Activated CD4-positive, alpha-beta T cell treated with anti-CD3 and anti-CD28 coated beads, Interleukin-2, amount 10 ng/mL, durations not matched to agents 24 days and 14 days (primary cell): ENCODE measurements at regions of chr3 and their contacts with region 1.

Region 1: DNA sequence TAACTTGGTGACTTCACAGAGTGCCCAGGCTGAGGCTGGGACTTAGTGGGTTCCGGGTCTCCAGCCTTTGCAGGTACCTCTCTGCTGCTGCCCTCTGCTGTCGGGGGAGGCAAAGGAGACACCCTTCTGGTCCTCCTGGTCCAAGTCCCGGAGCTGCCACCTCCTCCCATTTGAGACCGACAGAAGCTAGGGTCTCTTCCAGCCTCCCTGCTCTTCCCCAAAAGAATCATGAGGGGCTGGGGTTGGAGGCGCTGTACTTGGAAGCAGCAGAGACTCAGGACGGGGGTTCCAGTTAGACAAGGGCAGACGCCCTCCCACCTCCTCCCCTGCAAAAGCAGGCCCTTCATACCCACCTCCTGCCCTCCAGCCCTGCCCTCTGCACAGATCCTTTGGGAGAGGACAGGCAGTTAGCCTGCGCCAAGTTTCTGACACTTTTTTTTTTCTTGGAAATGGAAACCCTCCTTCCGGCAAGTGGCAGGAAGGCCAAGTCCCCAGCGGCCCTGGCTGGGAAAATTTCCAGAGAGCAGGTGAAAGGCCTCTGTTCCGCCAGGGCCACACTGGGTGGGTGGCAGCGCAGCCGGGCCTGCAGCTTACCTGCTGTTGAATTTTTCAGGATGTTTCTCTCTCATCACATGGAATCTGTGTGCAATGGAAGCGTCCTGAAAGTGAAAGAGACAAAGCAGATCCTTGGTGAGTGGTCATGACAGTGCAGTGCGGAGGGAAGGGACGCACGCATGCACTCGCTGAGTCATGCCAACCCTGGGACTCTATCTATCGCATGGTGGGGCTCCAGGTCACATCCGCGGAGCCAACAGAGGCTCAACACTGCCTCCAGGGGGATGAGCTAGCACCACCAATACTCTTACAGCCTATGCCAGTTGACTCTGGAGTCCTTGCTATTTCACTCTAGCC is 119.9 kb downstream of the DGKG start:
- DNase-seq: peak; percentile 81
- H3K4me3 Mint-ChIP-seq: peak overlapping the region; percentile 47
- H3K27ac Mint-ChIP-seq: no peak overlapping the region
- H3K4me1 Mint-ChIP-seq: peaks cover 12% of the 10 kb centered on the region
- H3K27me3 Mint-ChIP-seq: peaks cover 16% of the 10 kb centered on the region

Region 2: DNA sequence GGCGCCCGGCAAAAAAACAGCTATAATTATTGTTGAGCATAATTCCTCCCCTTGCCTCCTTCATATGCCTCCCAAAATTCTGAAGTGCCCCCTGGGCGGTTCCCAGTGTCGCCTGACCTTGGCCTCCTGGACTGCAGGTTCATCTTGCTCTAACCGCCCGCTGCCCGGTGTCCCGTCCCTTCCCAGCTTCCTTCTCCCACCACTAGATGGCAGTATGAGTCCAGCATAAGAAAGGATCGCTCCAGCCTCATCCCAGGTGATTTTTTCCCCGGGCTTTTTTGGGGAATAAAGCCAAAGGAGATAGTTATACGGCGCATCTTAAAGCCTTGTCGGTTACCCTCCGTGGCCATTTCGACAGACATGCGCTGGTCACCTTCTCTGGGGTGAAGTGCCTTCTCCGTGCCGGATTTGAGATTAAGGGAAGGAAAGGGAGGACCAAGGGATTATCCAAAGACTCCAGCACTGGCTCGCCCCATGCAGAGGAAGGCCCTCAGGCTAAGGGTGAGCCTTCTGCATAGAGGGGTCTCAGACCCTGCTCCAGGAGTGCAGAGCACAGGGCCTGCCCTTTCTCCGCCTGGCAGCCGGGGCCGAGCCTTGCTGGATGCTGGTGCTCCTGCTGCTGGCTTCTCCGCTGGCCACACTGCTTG is 258.5 kb before region 1 on chr3:
- intact Hi-C with region 1: loop called (anchors 2 kb)
- DNase-seq: peak; percentile 88
- H3K4me3 Mint-ChIP-seq: no peak overlapping the region
- H3K27ac Mint-ChIP-seq: no peak overlapping the region
- H3K4me1 Mint-ChIP-seq: peaks cover 4% of the 10 kb centered on the region
- H3K27me3 Mint-ChIP-seq: peaks cover 35% of the 10 kb centered on the region

Region 3: DNA sequence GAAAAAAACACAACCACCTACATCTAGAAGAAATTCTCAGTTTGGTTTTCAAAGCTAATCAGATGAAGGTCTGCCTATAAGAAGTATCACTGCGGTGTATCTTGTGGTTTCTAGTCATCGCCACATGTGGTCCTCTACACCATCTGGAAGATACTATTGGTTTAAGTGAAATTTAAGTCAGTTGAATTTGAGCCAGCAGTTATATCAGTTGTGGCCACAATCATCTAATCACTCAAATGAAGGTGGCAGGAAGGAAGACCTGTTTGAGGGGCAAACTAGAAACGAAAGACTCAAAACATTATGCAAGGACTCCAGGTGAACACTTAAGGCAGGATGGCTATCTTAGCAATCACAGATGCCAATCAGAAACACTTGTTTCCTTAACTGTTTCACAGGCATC is 181.9 kb before region 1 on chr3:
- intact Hi-C with region 1: loop called (anchors 10 kb)
- DNase-seq: peak; percentile 70
- H3K4me3 Mint-ChIP-seq: no peak overlapping the region
- H3K27ac Mint-ChIP-seq: no peak overlapping the region
- H3K4me1 Mint-ChIP-seq: peaks cover 10% of the 10 kb centered on the region
- H3K27me3 Mint-ChIP-seq: peaks cover 73% of the 10 kb centered on the region

Region 4: DNA sequence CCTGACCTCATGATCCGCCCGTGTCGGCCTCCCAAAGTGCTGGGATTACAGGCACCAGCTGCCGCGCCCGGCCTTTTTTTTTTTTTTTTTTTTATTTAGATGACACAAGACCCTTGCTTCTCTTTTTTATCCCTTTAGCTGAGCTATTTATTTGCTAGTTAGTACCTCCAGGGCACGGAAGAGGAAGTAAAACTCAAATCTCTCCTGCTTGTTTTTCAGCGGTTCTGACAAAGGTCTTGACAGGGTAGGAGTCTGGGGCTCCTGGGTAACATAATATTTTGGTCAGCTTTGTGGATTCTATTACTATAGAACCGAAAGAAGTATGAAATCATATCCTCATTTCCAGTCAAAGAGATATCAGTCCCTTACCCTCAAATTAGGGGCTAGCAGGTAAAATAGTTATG is 89.3 kb before region 1 on chr3:
- intact Hi-C with region 1: loop called (anchors 5 kb)
- DNase-seq: no peak
- H3K4me3 Mint-ChIP-seq: no peak overlapping the region
- H3K27ac Mint-ChIP-seq: no peak overlapping the region
- H3K4me1 Mint-ChIP-seq: peaks cover 15% of the 10 kb centered on the region
- H3K27me3 Mint-ChIP-seq: peaks cover 40% of the 10 kb centered on the region